ENCODE measurements at regions of chr3 and their contacts with region 1.

Region 1: DNA sequence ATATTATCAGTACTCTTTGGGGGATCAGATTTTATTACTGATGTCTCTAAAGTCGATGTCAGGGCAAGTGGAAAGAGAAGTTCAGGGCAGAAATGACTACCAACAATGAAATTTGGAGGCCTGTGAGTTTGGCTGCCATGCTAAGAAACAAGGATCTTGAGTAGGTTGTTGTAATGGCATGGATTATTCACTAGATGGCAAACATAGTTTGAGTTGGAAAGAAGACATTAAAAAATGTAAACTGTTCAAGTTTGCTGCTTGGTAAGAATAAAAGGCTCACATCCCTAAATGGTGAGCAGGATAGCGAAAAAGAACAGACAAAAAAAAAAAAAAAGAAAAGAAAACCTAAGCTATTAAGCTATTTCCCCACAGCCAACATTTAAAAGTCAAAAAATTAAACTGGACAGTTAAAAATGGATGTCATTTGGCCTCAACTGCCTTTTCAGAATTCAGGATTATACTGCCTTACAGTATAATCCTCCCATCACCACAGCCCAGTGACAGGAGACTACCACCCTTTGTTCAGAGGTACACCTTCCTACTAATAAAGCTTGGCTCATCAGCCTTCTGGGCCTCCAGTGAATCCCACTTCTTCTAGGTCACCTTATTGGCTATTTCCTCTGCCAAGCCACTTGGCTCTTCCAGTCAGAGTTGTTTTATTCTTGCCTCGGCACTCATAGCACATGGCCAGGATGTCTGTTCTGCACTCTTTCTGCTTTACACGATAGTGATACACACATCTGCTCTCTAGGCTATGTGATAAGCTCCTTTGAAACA is 163.7 kb downstream of the PLD1 start:
- DNase-seq: peak; percentile 70
- H3K4me3 ChIP-seq: no peak overlapping the region
- H3K27ac ChIP-seq: no peak overlapping the region
- H3K4me1 ChIP-seq: peaks cover 3% of the 10 kb centered on the region
- H3K27me3 ChIP-seq: no peaks in the 10 kb centered on the region
- CTCF ChIP-seq: peak; percentile 15 to 45
- POLR2A ChIP-seq: no peak

Region 2: DNA sequence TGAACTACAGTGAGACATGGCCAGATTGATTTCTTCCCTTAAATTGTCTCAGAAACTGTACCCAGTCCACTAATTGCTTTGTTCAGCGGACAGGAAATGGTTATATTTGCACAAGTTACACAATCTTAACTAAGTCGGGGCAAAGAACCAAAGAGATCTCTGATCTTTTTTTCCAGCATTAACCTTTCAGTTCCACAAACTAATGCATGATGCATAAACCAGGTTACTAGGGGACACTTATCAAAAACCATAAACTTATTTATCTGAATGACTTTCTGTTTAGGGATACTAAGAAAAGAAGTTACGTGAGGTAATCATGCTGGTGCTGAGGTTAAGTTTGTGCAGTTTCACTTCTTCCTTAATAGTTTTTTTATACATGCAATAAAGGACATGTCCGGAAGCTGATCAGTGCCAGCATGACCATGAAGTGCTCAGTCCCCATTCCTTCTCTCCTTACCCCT is 415.2 kb after region 1 on chr3:
- CTCF ChIA-PET with region 1: no interaction called
- POLR2A ChIA-PET with region 1: no interaction called
- dilution Hi-C with region 1: no loop called
- intact Hi-C with region 1: loop called (anchors 10 kb)
- DNase-seq: peak; percentile 69
- H3K4me3 ChIP-seq: peak overlapping the region in 1 of 3 experiments; percentile 3
- H3K27ac ChIP-seq: peak overlapping the region; percentile 38
- H3K4me1 ChIP-seq: peaks cover 80% of the 10 kb centered on the region
- H3K27me3 ChIP-seq: no peaks in the 10 kb centered on the region
- CTCF ChIP-seq: no peak
- POLR2A ChIP-seq: peak; percentile 8